K562 (cell line): ENCODE measurements at regions of chr2 and their contacts with region 1.

Region 1: GRCh38 chr2:121076885-121077549 is 208.0 kb downstream of the TFCP2L1 start:
- DNase-seq: peak; percentile 80 to 86 (median 86)
- ATAC-seq: peak; percentile 81
- H3K4me3 ChIP-seq: no peak overlapping the region
- H3K27ac ChIP-seq: no peak overlapping the region
- H3K4me1 ChIP-seq: peaks cover 0 to 17% of the 10 kb centered on the region in 2 experiments; a peak in 2 of 5 replicates
- H3K27me3 ChIP-seq: peaks cover 6 to 52% of the 10 kb centered on the region in 2 experiments; a peak in 3 of 5 replicates
- CTCF ChIP-seq: peak; percentile 89 to 95 (median 89)
- EP300 ChIP-seq: no peak
- POLR2A ChIP-seq: no peak
- RAD21 ChIP-seq: peak in 1 of 2 experiments; percentile 59; a peak in 3 of 4 replicates

Region 2: DNA sequence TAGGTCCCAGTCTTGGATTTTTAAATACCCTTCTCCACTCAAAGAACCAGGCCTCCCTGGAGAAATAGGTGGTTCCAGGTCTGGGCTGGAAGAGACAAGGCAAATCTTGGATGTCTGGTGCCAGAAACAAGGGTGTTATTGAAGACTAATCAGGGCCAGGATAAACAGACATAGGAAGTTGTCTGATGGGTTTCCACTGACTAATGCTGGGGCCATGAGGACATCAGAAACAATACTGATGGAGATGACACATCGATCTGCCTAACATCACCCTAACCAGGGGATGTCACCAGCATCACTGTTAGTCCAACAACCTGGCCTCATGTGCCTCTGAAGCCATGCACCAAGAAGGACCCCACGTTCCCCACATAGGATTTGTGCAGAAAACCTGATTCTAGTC is 383.9 kb before region 1 on chr2:
- CTCF ChIA-PET with region 1: interaction called, 57 read pairs
- POLR2A ChIA-PET with region 1: interaction called, 6 read pairs
- in situ Hi-C with region 1: loop called (anchors 5 kb)
- intact Hi-C with region 1: no loop called
- DNase-seq: no peak
- ATAC-seq: no peak
- H3K4me3 ChIP-seq: no peak overlapping the region
- H3K27ac ChIP-seq: no peak overlapping the region
- H3K4me1 ChIP-seq: no peaks in the 10 kb centered on the region
- H3K27me3 ChIP-seq: peaks cover 17 to 51% of the 10 kb centered on the region in 2 experiments
- CTCF ChIP-seq: no peak
- EP300 ChIP-seq: no peak
- POLR2A ChIP-seq: no peak
- RAD21 ChIP-seq: no peak

Region 3: DNA sequence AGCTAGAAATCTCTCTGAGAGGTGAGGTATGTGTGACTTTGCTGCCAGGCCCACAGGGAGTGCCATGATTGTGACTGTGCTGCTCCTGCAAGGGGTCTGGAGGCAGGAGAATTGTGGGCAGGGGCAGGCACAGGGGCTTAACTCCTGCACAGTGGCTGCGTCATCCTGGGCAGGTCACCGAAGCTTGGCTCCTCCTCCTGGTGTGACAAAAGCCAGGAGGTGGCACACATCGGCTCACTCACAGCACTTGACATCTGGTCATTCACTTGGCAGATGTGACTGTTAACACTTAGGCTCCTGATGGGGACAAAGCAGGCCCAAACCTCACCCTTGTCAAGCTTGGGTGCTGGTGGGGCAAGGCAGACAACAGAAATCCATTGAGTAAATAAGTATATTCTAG is 377.7 kb before region 1 on chr2:
- CTCF ChIA-PET with region 1: interaction called, 57 read pairs
- POLR2A ChIA-PET with region 1: interaction called, 6 read pairs
- in situ Hi-C with region 1: loop called (anchors 5 kb)
- intact Hi-C with region 1: no loop called
- DNase-seq: no peak
- ATAC-seq: no peak
- H3K4me3 ChIP-seq: no peak overlapping the region
- H3K27ac ChIP-seq: no peak overlapping the region
- H3K4me1 ChIP-seq: no peaks in the 10 kb centered on the region
- H3K27me3 ChIP-seq: peaks cover 19 to 55% of the 10 kb centered on the region in 2 experiments
- CTCF ChIP-seq: no peak
- EP300 ChIP-seq: no peak
- POLR2A ChIP-seq: no peak
- RAD21 ChIP-seq: no peak

Region 4: GRCh38 chr2:120879431-120880295 is 197.4 kb before region 1 on chr2:
- CTCF ChIA-PET with region 1: no interaction called
- POLR2A ChIA-PET with region 1: interaction called, 4 read pairs
- in situ Hi-C with region 1: no loop called
- intact Hi-C with region 1: loop called (anchors 10 kb)
- DNase-seq: no peak
- ATAC-seq: peak; percentile 64
- H3K4me3 ChIP-seq: no peak overlapping the region
- H3K27ac ChIP-seq: no peak overlapping the region
- H3K4me1 ChIP-seq: peaks cover 0 to 9% of the 10 kb centered on the region in 2 experiments; a peak in 2 of 5 replicates
- H3K27me3 ChIP-seq: peaks cover 53 to 81% of the 10 kb centered on the region in 2 experiments
- CTCF ChIP-seq: peak; percentile 20 to 59 (median 50); a peak in 4 of 6 replicates
- EP300 ChIP-seq: no peak
- POLR2A ChIP-seq: no peak
- RAD21 ChIP-seq: peak; percentile 28 to 37; a peak in 3 of 4 replicates

Region 5: GRCh38 chr2:121710470-121711170 is 633.6 kb after region 1 on chr2:
- CTCF ChIA-PET with region 1: no interaction called
- POLR2A ChIA-PET with region 1: no interaction called
- in situ Hi-C with region 1: no loop called
- intact Hi-C with region 1: loop called (anchors 10 kb)
- DNase-seq: peak in 1 of 4 experiments; percentile 4
- ATAC-seq: no peak
- H3K4me3 ChIP-seq: no peak overlapping the region
- H3K27ac ChIP-seq: no peak overlapping the region
- H3K4me1 ChIP-seq: no peaks in the 10 kb centered on the region
- H3K27me3 ChIP-seq: peaks cover 3 to 9% of the 10 kb centered on the region in 2 experiments; a peak in 2 of 5 replicates
- CTCF ChIP-seq: no peak
- EP300 ChIP-seq: no peak
- POLR2A ChIP-seq: no peak
- RAD21 ChIP-seq: no peak

Region 6: GRCh38 chr2:121790250-121790956 is 713.4 kb after region 1 on chr2:
- CTCF ChIA-PET with region 1: no interaction called
- POLR2A ChIA-PET with region 1: no interaction called
- in situ Hi-C with region 1: loop called (anchors 25 kb)
- intact Hi-C with region 1: no loop called
- DNase-seq: peak in 1 of 4 experiments; percentile 12
- ATAC-seq: peak; percentile 50
- H3K4me3 ChIP-seq: no peak overlapping the region
- H3K27ac ChIP-seq: no peak overlapping the region
- H3K4me1 ChIP-seq: no peaks in the 10 kb centered on the region
- H3K27me3 ChIP-seq: peaks cover 28 to 38% of the 10 kb centered on the region in 2 experiments
- CTCF ChIP-seq: no peak
- EP300 ChIP-seq: no peak
- POLR2A ChIP-seq: no peak
- RAD21 ChIP-seq: no peak

Region 7: GRCh38 chr2:122500316-122501105 is 1423.5 kb after region 1 on chr2:
- CTCF ChIA-PET with region 1: no interaction called
- POLR2A ChIA-PET with region 1: no interaction called
- in situ Hi-C with region 1: no loop called
- intact Hi-C with region 1: no loop called
- DNase-seq: no peak
- ATAC-seq: no peak
- H3K4me3 ChIP-seq: no peak overlapping the region
- H3K27ac ChIP-seq: no peak overlapping the region
- H3K4me1 ChIP-seq: no peaks in the 10 kb centered on the region
- H3K27me3 ChIP-seq: no peaks in the 10 kb centered on the region
- CTCF ChIP-seq: no peak
- EP300 ChIP-seq: no peak
- POLR2A ChIP-seq: no peak
- RAD21 ChIP-seq: no peak